Activated T-helper 1 cell treated with anti-CD3 and anti-CD28 coated beads, Interleukin-12 subunit alpha, Interleukin-12 subunit beta, Interleukin-2, Interleukin-4 antibody, amounts not matched to agents 30 ng/mL and 10 ng/mL and 1 ng/mL, durations not matched to agents 14 hours and 24 hours and 36 hours (primary cell): ENCODE measurements at regions of chr7 and their contacts with region 1.

Region 1: GRCh38 chr7:114966156-114966555 is 44.3 kb downstream of the MDFIC start:
- DNase-seq: no peak
- H3K4me3 Mint-ChIP-seq: no peak overlapping the region
- H3K27ac Mint-ChIP-seq: no peak overlapping the region
- H3K4me1 Mint-ChIP-seq: peaks cover 49% of the 10 kb centered on the region
- H3K27me3 Mint-ChIP-seq: no peaks in the 10 kb centered on the region

Region 2: DNA sequence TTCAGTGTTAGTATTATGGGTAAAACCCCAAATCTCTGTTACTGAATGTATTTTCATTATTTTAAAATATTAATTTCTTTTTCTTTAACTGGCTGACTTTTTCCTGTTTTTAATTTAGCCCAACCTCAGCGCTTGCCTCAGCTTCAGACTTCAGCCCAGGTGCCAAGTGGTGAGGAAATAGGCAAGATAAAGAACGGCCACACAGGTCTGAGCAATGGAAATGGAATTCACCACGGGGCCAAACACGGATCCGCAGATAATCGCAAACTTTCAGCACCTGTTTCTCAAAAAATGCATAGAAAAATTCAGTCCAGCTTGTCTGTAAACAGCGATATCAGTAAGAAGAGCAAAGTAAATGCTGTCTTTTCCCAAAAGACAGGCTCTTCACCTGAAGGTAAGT is 13.2 kb after region 1 on chr7:
- intact Hi-C with region 1: loop called (anchors 2 kb)
- DNase-seq: no peak
- H3K4me3 Mint-ChIP-seq: no peak overlapping the region
- H3K27ac Mint-ChIP-seq: no peak overlapping the region
- H3K4me1 Mint-ChIP-seq: peaks cover 41% of the 10 kb centered on the region
- H3K27me3 Mint-ChIP-seq: no peaks in the 10 kb centered on the region